SK-N-SH (cell line): ENCODE measurements at regions of chr19 and their contacts with region 1.

Region 1: DNA sequence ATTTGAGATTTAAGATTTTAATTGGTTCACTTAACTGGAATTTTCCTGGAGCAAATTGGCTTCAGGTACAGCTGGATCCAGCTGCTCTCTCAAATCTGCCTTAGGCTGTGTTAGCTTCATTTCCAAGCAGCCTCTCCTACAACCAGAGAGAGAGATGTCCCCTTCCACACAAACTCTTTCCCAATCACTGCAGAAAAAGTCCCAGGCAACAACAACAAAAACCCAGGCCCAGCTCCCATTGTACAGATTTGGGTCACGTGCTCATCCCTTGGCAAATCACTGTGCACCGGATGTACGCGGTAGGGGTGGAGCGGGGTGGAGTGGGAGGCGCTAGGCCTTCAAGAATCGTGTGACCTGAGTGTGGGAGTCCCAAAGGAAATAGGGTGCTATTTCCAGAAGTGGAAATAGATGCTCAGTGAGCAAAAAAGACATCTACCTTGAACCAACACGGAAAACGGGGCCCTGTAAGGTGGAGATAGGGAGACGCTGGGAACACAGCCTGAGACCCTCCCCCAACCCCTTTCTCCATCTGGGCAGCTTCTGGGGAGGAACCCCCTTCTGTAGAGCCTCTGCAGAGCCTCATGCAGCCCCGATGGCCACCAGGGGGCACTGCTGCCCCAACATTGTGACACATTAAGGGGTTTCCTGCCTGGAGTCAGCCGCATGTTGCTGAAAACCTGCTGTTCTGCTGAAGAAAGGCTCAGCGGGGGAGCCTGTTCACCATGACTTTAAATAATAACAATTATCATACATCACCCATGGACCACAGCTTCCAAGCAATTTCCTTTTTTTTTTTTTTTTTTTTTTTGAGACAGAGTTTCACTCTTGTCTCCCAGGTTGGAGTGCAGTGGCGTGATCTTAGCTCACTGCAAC is 25.4 kb downstream of the HPN start:
- DNase-seq: peak; percentile 90
- H3K4me3 ChIP-seq: no peak overlapping the region; a peak in 1 of 4 replicates
- H3K27ac ChIP-seq: no peak overlapping the region
- H3K4me1 ChIP-seq: no peaks in the 10 kb centered on the region; a peak in 1 of 4 replicates
- H3K27me3 ChIP-seq: 0 out of 2 replicates have a peak, but pooled peaks cover 3% of the 10 kb centered on the region
- CTCF ChIP-seq: peak; percentile 94
- EP300 ChIP-seq: no peak
- RAD21 ChIP-seq: peak; percentile 94

Region 2: DNA sequence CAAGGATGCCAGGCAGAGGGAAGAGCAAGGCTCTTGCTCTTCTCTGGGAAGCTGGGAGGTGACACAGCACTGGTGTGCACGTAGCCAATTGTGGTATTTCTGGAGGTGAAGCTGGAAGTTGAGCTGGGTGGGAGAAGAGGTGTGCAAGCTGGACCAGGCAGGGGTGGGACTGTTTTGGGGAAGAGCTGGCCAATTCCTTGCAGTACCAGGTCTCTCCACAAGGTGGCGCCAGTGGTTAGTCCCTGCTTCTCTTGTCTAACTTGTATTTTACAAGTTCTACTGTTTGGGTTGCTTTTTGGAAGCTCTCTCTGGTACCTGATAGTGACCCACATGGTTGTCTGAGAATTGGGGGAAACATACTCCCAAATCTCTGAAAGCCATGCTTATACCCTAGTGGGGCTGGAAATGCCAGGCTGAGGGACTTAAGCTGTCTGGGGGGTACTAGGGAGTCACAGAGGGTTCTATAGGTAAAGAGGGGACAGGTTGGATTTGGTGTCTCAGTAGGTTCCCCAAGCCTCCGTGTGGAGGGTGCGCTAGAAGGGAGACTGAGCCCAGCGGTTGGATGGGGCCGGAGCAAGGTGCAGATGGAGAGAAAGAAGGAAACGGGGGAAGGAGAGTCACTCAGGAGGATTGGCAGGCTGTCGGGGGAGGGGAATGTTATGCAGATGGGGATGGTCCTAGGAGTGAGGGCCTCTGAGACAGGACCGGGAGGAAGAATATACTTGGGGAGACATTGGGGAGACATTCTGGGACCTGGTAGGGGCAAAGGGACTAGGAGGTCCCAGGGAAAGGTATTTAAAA is 22.4 kb before region 1 on chr19:
- CTCF ChIA-PET with region 1: interaction called, 25 read pairs
- POLR2A ChIA-PET with region 1: no interaction called
- DNase-seq: peak; percentile 85
- H3K4me3 ChIP-seq: peak overlapping the region in 1 of 2 experiments; percentile 26; a peak in 1 of 4 replicates
- H3K27ac ChIP-seq: no peak overlapping the region
- H3K4me1 ChIP-seq: peaks cover 0 to 8% of the 10 kb centered on the region in 2 experiments; a peak in 1 of 4 replicates
- H3K27me3 ChIP-seq: no peaks in the 10 kb centered on the region
- CTCF ChIP-seq: peak; percentile 98
- EP300 ChIP-seq: no peak
- RAD21 ChIP-seq: peak; percentile 62

Region 3: GRCh38 chr19:35080613-35081170 is 13.8 kb after region 1 on chr19:
- CTCF ChIA-PET with region 1: interaction called, 38 read pairs
- POLR2A ChIA-PET with region 1: no interaction called
- DNase-seq: no peak
- H3K4me3 ChIP-seq: no peak overlapping the region
- H3K27ac ChIP-seq: no peak overlapping the region
- H3K4me1 ChIP-seq: no peaks in the 10 kb centered on the region
- H3K27me3 ChIP-seq: no peaks in the 10 kb centered on the region
- CTCF ChIP-seq: no peak
- EP300 ChIP-seq: no peak
- RAD21 ChIP-seq: no peak

Region 4: DNA sequence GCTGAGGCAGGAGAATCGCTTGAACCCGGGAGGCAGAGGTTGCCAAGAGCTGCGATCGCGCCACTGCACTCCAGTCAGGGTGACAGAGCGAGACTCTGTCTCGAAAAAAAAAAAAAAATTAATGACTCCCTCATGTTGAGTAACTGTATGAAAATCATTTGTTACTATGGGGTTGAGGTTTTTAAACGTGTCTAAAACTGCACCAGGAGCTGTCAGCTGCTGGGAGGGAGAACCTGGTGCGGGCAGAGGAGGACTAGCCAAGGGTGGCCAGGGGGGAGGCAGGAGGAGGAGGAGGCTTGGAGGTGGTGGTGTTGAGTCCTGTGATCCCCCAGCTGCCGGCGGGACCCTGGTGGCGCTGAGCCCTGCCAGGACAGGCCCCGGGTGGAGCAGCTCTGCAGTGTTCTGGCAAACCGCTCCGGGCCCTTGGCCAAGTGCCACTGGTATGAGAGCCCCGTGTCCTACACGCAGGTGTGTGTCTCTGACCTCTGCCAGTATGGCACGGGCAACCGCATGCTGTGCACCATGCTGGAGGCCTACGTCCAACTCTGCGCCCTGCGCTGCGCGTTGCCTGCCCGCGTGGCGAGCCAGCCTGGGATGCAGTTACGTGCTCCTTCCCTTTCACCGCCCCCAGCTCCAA is 31.6 kb after region 1 on chr19:
- CTCF ChIA-PET with region 1: interaction called, 49 read pairs
- POLR2A ChIA-PET with region 1: no interaction called
- DNase-seq: no peak
- H3K4me3 ChIP-seq: no peak overlapping the region
- H3K27ac ChIP-seq: no peak overlapping the region
- H3K4me1 ChIP-seq: peaks cover 0 to 8% of the 10 kb centered on the region in 2 experiments; a peak in 1 of 4 replicates
- H3K27me3 ChIP-seq: no peaks in the 10 kb centered on the region
- CTCF ChIP-seq: no peak
- EP300 ChIP-seq: no peak
- RAD21 ChIP-seq: no peak

Region 5: DNA sequence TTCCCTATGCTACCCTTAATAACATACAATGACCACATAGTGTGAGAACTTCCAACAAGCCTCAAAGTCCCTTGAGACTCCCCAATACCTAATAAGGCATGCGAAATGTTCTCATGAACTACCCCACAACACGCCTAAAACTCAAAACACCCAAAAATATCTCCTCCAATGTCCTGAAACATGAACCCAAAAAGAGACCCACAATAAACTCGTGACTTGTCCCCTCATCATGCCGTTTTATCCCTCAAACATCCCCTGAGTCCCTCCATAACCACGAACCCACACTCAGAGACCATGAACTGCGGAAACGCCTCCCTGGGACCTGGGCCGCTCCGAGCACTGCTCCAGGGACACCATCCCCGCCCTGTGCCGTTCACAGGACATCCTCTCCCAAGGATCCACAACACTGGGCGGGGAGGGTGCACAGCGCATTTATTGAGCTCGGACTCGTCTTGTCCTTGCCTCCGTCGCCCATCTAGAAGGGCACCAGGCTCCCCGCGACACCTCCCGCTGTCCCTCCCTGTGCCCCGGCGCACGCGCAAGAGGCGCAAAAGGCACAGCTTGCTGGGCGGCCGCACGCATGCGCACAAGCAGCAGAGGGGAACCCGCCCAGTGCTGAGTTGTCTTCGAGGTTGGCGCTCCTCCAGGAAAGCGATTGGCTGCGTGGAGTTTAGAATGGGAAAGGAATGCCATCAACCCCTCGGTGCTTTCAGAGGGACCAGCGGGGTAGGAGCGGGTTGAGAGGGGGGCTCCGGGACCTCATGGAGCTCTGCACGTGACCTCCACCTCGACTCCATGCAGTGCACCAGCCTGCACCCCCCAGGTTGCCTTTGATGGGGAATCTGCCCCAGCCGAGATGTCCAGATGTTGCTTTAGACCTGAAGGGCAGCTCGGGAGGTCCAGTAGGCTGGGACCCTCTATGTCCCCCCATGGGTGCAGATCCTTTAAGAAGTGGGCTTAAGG is 57.5 kb after region 1 on chr19:
- CTCF ChIA-PET with region 1: interaction called, 18 read pairs
- POLR2A ChIA-PET with region 1: no interaction called
- DNase-seq: peak; percentile 98
- H3K4me3 ChIP-seq: peak overlapping the region; percentile 57 to 65
- H3K27ac ChIP-seq: peak overlapping the region in 1 of 2 experiments; percentile 71; a peak in 1 of 4 replicates
- H3K4me1 ChIP-seq: peaks cover 0 to 8% of the 10 kb centered on the region in 2 experiments; a peak in 1 of 4 replicates
- H3K27me3 ChIP-seq: no peaks in the 10 kb centered on the region; the same call in 1 of the 2 replicates
- CTCF ChIP-seq: no peak
- EP300 ChIP-seq: no peak
- RAD21 ChIP-seq: no peak

Region 6: GRCh38 chr19:35140962-35141637 is 74.2 kb after region 1 on chr19:
- CTCF ChIA-PET with region 1: interaction called, 65 read pairs
- POLR2A ChIA-PET with region 1: no interaction called
- DNase-seq: peak; percentile 100
- H3K4me3 ChIP-seq: peak overlapping the region in 1 of 2 experiments; percentile 41; a peak in 2 of 4 replicates
- H3K27ac ChIP-seq: no peak overlapping the region
- H3K4me1 ChIP-seq: peaks cover 0 to 25% of the 10 kb centered on the region in 2 experiments; a peak in 2 of 4 replicates
- H3K27me3 ChIP-seq: peaks cover 41% of the 10 kb centered on the region; the same call in 1 of the 2 replicates
- CTCF ChIP-seq: peak; percentile 47
- EP300 ChIP-seq: no peak
- RAD21 ChIP-seq: peak; percentile 48

Region 7: DNA sequence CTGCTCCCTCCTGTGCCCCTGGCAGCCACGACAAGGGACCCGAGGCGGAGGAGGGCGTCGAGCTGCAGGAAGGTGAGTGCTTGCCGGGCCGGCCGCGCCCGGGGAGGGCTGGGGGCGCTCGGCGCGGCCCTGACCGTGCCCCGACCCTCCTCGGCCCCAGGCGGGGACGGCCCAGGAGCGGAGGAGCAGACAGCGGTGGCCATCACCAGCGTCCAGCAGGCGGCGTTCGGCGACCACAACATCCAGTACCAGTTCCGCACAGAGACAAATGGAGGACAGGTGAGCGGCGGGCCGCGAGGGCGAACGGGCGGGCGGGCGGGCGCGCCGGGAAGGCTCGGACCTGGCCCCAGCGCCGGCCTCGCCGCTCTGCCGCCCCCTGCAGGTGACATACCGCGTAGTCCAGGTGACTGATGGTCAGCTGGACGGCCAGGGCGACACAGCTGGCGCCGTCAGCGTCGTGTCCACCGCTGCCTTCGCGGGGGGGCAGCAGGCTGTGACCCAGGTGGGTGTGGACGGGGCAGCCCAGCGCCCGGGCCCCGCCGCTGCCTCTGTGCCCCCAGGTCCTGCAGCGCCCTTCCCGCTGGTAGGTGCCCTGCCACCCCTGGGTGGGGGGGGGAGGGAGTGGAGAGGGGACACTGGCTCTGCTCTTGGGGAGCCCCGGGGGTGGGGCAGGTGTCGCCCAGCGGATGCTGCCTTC is 202.6 kb after region 1 on chr19:
- CTCF ChIA-PET with region 1: interaction called, 11 read pairs
- POLR2A ChIA-PET with region 1: no interaction called
- DNase-seq: peak; percentile 89
- H3K4me3 ChIP-seq: peak overlapping the region; percentile 61 to 87; a peak in 3 of 4 replicates
- H3K27ac ChIP-seq: peak overlapping the region in 1 of 2 experiments; percentile 92; a peak in 2 of 4 replicates
- H3K4me1 ChIP-seq: peaks cover 4 to 15% of the 10 kb centered on the region in 2 experiments; a peak in 1 of 4 replicates
- H3K27me3 ChIP-seq: no peaks in the 10 kb centered on the region
- CTCF ChIP-seq: peak; percentile 45; the same call in 1 of the 2 replicates
- EP300 ChIP-seq: no peak
- RAD21 ChIP-seq: peak; percentile 50